Dorsolateral prefrontal cortex (tissue), 120 donors: ENCODE measurements at regions of chr2 and their contacts with region 1.

Region 1: DNA sequence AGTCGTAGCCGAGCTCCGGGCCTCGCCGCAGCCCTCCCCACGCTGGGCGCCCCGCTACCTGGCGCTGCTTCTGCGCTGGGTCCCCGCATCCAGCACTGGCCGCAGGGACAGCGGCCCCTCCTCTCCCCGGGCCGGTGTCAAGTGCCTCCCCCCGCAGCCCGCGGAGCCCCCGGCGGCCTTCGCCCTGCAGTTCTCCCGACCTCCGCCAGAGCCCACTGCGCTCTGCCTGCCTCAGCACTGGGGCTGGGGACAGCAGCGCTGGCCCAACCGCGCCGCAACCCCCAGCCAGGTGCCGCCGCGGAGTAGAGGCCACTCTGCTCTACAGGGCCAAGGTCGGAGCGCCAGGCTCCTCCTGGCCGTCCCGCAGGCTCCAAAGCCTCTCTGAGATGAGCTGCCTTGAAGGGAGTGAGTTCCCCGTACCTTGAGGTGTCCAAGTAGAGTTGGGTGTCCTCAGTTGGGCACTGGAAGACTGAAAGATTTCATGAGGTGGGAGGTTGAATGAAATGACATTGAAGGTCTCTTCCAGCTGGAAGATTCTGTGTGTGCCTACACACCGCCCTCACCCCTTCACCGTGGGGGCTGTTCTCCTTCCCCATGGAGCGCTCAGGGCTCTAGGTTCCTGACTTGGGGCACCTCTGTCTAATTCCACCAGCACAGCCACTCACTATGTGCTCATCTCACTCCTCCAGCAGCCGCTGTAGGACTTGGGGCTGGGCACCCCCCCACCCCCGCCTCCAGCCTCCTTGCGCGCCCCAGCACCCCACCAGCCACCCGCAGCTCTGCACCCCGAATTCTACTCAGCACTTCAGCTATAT is 854 bp upstream of the DNMT3A start:
- DNase-seq: peak; percentile 63 to 90 (median 78)
- H3K4me3 ChIP-seq: peak overlapping the region; percentile 48 to 86 (median 72)
- H3K27ac ChIP-seq: peak overlapping the region; percentile 56 to 98 (median 94)
- H3K27me3 ChIP-seq: no peaks in the 10 kb centered on the region
- CTCF ChIP-seq: peak; percentile 57 to 98 (median 91)

Region 2: DNA sequence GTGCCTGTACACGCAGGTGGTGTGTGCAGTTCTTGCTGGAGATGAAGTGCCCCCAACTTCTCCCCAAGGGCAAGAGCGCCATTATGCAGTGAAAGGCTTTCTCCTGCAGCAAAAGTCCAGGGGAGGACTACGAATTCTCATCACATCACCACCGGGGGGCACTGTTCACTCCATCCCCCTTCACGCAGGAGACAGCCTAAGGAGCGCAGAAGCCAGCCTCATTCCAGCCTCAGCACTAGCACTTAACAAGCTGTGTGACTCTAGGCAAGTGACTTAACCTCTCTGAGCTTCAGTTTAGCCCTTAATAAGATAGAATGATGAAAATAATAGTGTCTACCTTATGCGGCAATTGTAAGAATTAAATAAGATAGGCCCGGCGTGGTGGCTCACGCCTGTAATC is 33.2 kb before region 1 on chr2:
- intact Hi-C with region 1: loop called (anchors 2 to 5 kb)
- DNase-seq: peak in 9 of 10 donors; percentile 55 to 80 (median 74)
- H3K4me3 ChIP-seq: peak overlapping the region in 1 of 59 donors; percentile 6
- H3K27ac ChIP-seq: peak overlapping the region in 54 of 59 donors; percentile 18 to 86 (median 70)
- H3K27me3 ChIP-seq: no peaks in the 10 kb centered on the region
- CTCF ChIP-seq: peak; percentile 31 to 72 (median 60)

Region 3: DNA sequence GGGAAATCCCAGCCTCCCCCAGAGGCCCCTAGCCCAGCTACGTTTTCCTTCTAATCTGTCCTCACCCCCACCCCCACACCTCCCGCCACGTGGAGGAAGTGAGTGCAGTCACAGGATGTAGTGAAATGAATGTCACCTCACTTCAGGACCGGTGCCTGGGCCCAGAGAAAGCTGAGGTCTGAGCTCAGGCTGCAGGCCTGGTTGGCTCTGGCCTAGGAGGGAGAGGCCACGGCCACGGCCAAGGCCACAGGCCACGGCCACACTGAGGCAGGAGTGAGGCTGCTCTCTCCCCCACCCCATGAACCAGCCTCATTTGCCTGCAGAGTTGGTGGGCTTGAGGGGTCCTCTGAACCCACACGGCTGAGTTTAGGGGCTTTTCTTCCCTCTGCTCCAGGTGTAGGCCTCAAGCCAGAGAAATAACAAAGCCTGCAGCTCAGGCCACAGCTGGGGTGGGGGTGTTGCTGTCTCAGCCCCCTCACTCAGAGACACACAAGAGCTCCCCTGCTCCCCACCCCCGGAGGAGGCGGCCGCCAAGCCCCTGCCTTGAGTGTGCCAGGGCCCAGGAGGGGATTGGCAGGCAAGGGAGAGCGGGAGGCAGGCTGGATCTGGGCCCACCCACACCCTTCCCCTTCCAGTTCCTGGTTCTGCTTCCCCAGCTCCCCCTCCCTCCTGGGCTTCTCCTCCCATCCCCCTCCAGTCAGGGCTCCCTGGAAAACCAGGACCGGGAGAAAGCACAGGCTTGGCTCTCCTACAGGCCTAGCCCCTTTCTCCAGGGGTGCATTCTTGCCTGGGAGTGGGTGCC is 27.9 kb before region 1 on chr2:
- intact Hi-C with region 1: loop called (anchors 2 to 5 kb)
- DNase-seq: peak in 8 of 10 donors; percentile 41 to 74 (median 68)
- H3K4me3 ChIP-seq: peak overlapping the region in 11 of 59 donors; percentile 6 to 35 (median 17)
- H3K27ac ChIP-seq: peak overlapping the region in 58 of 59 donors; percentile 34 to 90 (median 78)
- H3K27me3 ChIP-seq: no peaks in the 10 kb centered on the region
- CTCF ChIP-seq: no peak

Region 4: GRCh38 chr2:25362049-25362433 is 19.5 kb after region 1 on chr2:
- intact Hi-C with region 1: loop called in 1 of 2 experiments (anchors 2 kb)
- DNase-seq: peak; percentile 86 to 93 (median 90)
- H3K4me3 ChIP-seq: peak overlapping the region; percentile 35 to 74 (median 55)
- H3K27ac ChIP-seq: peak overlapping the region in 46 of 59 donors; percentile 4 to 80 (median 52)
- H3K27me3 ChIP-seq: no peaks in the 10 kb centered on the region
- CTCF ChIP-seq: peak; percentile 93 to 99 (median 98)

Region 5: GRCh38 chr2:25376750-25377621 is 34.4 kb after region 1 on chr2:
- intact Hi-C with region 1: loop called (anchors 5 kb)
- DNase-seq: peak; percentile 70 to 87 (median 78)
- H3K4me3 ChIP-seq: peak overlapping the region in 58 of 59 donors; percentile 15 to 64 (median 46)
- H3K27ac ChIP-seq: peak overlapping the region; percentile 0 to 89 (median 74)
- H3K27me3 ChIP-seq: no peaks in the 10 kb centered on the region
- CTCF ChIP-seq: peak; percentile 75 to 99 (median 96)

Region 6: GRCh38 chr2:25431604-25432003 is 89.0 kb after region 1 on chr2:
- intact Hi-C with region 1: no loop called
- DNase-seq: no peak
- H3K4me3 ChIP-seq: no peak overlapping the region
- H3K27ac ChIP-seq: peak overlapping the region in 6 of 59 donors; percentile 6 to 59 (median 23)
- H3K27me3 ChIP-seq: no peaks in the 10 kb centered on the region
- CTCF ChIP-seq: no peak

Region 7: GRCh38 chr2:25521665-25522387 is 179.2 kb after region 1 on chr2:
- intact Hi-C with region 1: loop called in 1 of 2 experiments (anchors 5 kb)
- DNase-seq: peak in 1 of 10 donors; percentile 29
- H3K4me3 ChIP-seq: peak overlapping the region in 54 of 59 donors; percentile 2 to 63 (median 38)
- H3K27ac ChIP-seq: peak overlapping the region in 46 of 59 donors; percentile 3 to 82 (median 55)
- H3K27me3 ChIP-seq: no peaks in the 10 kb centered on the region
- CTCF ChIP-seq: peak; percentile 73 to 94 (median 87)

Region 8: GRCh38 chr2:25567406-25567805 is 224.8 kb after region 1 on chr2:
- intact Hi-C with region 1: loop called in 1 of 2 experiments (anchors 5 kb)
- DNase-seq: no peak
- H3K4me3 ChIP-seq: no peak overlapping the region
- H3K27ac ChIP-seq: peak overlapping the region in 28 of 59 donors; percentile 4 to 64 (median 45)
- H3K27me3 ChIP-seq: no peaks in the 10 kb centered on the region
- CTCF ChIP-seq: peak; percentile 25 to 76 (median 58)